ENCODE measurements at regions of chr12 and their contacts with region 1.

Region 1: GRCh38 chr12:3658327-3659163 is 94.4 kb downstream of the CRACR2A start:
- DNase-seq: peak in 1 of 5 donors; percentile 43
- H3K4me3 ChIP-seq: no peak overlapping the region
- H3K27ac ChIP-seq: no peak overlapping the region
- H3K4me1 ChIP-seq: no peaks in the 10 kb centered on the region
- H3K27me3 ChIP-seq: no peaks in the 10 kb centered on the region
- CTCF ChIP-seq: no peak
- EP300 ChIP-seq: no peak
- POLR2A ChIP-seq: no peak

Region 2: GRCh38 chr12:3777206-3777809 is 118.8 kb after region 1 on chr12:
- intact Hi-C with region 1: loop called in 2 of 4 experiments (anchors 10 kb)
- DNase-seq: no peak
- H3K4me3 ChIP-seq: no peak overlapping the region
- H3K27ac ChIP-seq: no peak overlapping the region
- H3K4me1 ChIP-seq: no peaks in the 10 kb centered on the region
- H3K27me3 ChIP-seq: no peaks in the 10 kb centered on the region
- CTCF ChIP-seq: peak in 1 of 3 donors; percentile 41
- EP300 ChIP-seq: no peak
- POLR2A ChIP-seq: no peak

Measured in ovary (tissue), 10 donors.